ENCODE measurements at regions of chr7 and their contacts with region 1.

Region 1: GRCh38 chr7:132580717-132581285 is 4.5 kb upstream of the PLXNA4 start:
- DNase-seq: peak; percentile 81
- ATAC-seq: peak; percentile 82
- H3K4me3 Mint-ChIP-seq: no peak overlapping the region
- H3K27ac Mint-ChIP-seq: no peak overlapping the region
- H3K4me1 Mint-ChIP-seq: peaks cover 11% of the 10 kb centered on the region
- H3K27me3 Mint-ChIP-seq: peaks cover 57% of the 10 kb centered on the region

Region 2: GRCh38 chr7:132318352-132319318 is 262.2 kb before region 1 on chr7:
- CTCF ChIA-PET with region 1: interaction called, 114 read pairs
- DNase-seq: peak; percentile 85
- ATAC-seq: peak; percentile 97
- H3K4me3 Mint-ChIP-seq: no peak overlapping the region
- H3K27ac Mint-ChIP-seq: no peak overlapping the region
- H3K4me1 Mint-ChIP-seq: peaks cover 20% of the 10 kb centered on the region
- H3K27me3 Mint-ChIP-seq: peaks cover 54% of the 10 kb centered on the region

Region 3: GRCh38 chr7:132394283-132395198 is 186.3 kb before region 1 on chr7:
- CTCF ChIA-PET with region 1: interaction called, 216 read pairs
- DNase-seq: peak; percentile 60
- ATAC-seq: peak; percentile 84
- H3K4me3 Mint-ChIP-seq: no peak overlapping the region
- H3K27ac Mint-ChIP-seq: no peak overlapping the region
- H3K4me1 Mint-ChIP-seq: peaks cover 11% of the 10 kb centered on the region
- H3K27me3 Mint-ChIP-seq: peaks cover 12% of the 10 kb centered on the region

Region 4: GRCh38 chr7:132443776-132444520 is 136.9 kb before region 1 on chr7:
- CTCF ChIA-PET with region 1: interaction called, 11 read pairs
- DNase-seq: no peak
- ATAC-seq: no peak
- H3K4me3 Mint-ChIP-seq: no peak overlapping the region
- H3K27ac Mint-ChIP-seq: no peak overlapping the region
- H3K4me1 Mint-ChIP-seq: peaks cover 49% of the 10 kb centered on the region
- H3K27me3 Mint-ChIP-seq: peaks cover 24% of the 10 kb centered on the region

Region 5: DNA sequence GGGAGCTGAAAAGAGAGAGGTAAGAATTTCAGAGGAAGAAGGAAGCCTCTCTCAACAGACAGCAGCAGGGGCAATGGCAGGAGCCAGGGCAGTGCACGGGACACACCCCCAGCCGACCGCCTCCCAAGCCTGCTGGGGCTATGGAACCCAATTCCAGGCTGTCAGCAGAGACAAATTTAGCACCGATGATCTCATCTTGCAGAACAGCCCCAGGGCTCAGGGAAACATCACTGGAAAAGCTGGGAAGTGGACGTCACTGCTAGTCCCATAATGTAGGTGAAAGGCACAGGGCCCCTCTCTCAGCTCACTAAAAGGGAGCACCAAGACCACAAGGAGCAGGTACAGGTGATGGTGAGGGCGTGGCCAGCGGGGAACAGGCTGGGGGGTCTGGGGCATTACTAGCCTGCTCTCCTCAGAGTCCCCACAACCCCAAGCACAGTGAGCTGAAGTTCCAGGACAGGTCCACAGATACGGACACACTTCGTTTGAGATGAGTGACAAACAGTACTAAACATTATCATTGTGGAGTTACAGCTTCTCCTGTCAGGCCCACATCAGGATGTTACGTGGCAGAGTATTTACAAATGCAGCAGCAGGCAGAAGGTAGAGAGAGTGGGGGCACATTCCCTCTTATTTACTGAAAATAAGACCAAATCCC is 108.2 kb before region 1 on chr7:
- CTCF ChIA-PET with region 1: no interaction called
- DNase-seq: no peak
- ATAC-seq: no peak
- H3K4me3 Mint-ChIP-seq: no peak overlapping the region
- H3K27ac Mint-ChIP-seq: no peak overlapping the region
- H3K4me1 Mint-ChIP-seq: peaks cover 12% of the 10 kb centered on the region
- H3K27me3 Mint-ChIP-seq: peaks cover 59% of the 10 kb centered on the region

Region 6: DNA sequence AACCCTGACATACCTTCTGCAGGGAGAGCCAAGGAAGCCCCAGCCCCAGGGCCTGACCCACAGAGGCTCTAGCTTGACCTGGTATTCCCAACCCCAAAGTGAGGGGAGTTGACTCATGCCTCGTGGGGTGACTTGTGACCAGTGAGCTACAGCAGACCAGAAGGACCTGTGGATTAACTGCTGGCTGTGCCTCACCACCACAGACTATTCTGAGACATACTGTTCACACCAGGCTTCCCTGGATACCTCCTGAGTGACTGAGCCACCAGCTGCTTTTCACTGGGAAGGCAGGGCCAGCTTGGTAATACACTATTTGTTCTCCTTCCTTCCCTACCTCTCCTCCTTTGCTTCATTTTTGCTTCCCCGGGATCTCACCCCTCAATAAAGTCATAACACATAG is 11.8 kb before region 1 on chr7:
- CTCF ChIA-PET with region 1: interaction called, 13 read pairs
- DNase-seq: no peak
- ATAC-seq: no peak
- H3K4me3 Mint-ChIP-seq: no peak overlapping the region
- H3K27ac Mint-ChIP-seq: no peak overlapping the region
- H3K4me1 Mint-ChIP-seq: no peaks in the 10 kb centered on the region
- H3K27me3 Mint-ChIP-seq: peaks cover 83% of the 10 kb centered on the region

Region 7: GRCh38 chr7:132646052-132646451 is 65.3 kb after region 1 on chr7:
- CTCF ChIA-PET with region 1: no interaction called
- DNase-seq: no peak
- ATAC-seq: no peak
- H3K4me3 Mint-ChIP-seq: no peak overlapping the region
- H3K27ac Mint-ChIP-seq: no peak overlapping the region
- H3K4me1 Mint-ChIP-seq: no peaks in the 10 kb centered on the region
- H3K27me3 Mint-ChIP-seq: peaks cover 2% of the 10 kb centered on the region